GM12878 (cell line): ENCODE measurements at regions of chr17 and their contacts with region 1.

Region 1: GRCh38 chr17:48024937-48025906 is 12.4 kb downstream of the COPZ2 start:
- DNase-seq: peak; percentile 70
- ATAC-seq: peak; percentile 91
- H3K4me3 ChIP-seq: peak overlapping the region; percentile 80
- H3K27ac ChIP-seq: no peak overlapping the region
- H3K4me1 ChIP-seq: peaks cover 27% of the 10 kb centered on the region
- H3K27me3 ChIP-seq: no peaks in the 10 kb centered on the region; a peak in 2 of 4 replicates
- CTCF ChIP-seq: peak; percentile 85 to 98 (median 89)
- EP300 ChIP-seq: no peak
- POLR2A ChIP-seq: peak; percentile 54; the same call in 1 of the 2 replicates
- RAD21 ChIP-seq: peak; percentile 88

Region 2: DNA sequence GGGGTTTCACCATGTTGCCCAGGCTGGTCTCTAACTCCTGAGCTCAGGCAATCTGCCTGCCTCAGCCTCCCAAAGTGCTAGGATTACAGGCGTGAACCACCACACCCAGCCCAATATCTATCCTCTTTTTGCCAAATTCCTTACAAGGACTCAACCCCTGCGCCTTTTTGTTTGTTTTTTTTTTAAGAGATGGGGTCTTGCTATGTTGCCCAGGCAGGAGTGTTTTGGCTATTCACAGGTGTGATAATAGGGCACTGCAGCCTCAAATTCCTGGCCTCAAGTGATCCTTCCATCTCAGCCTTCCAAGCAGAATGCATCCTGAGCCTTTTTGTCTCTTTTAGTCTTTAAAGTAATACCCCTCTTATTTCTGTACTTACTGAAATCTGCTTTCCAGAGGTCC is 112.2 kb before region 1 on chr17:
- CTCF ChIA-PET with region 1: no interaction called
- POLR2A ChIA-PET with region 1: no interaction called
- RAD21 ChIA-PET with region 1: no interaction called
- SMC1A ChIA-PET with region 1: no interaction called
- in situ Hi-C with region 1: no loop called
- intact Hi-C with region 1: no loop called
- DNase-seq: no peak
- ATAC-seq: no peak
- H3K4me3 ChIP-seq: no peak overlapping the region
- H3K27ac ChIP-seq: no peak overlapping the region
- H3K4me1 ChIP-seq: no peaks in the 10 kb centered on the region
- H3K27me3 ChIP-seq: no peaks in the 10 kb centered on the region
- CTCF ChIP-seq: no peak
- EP300 ChIP-seq: no peak
- POLR2A ChIP-seq: no peak
- RAD21 ChIP-seq: no peak

Region 3: DNA sequence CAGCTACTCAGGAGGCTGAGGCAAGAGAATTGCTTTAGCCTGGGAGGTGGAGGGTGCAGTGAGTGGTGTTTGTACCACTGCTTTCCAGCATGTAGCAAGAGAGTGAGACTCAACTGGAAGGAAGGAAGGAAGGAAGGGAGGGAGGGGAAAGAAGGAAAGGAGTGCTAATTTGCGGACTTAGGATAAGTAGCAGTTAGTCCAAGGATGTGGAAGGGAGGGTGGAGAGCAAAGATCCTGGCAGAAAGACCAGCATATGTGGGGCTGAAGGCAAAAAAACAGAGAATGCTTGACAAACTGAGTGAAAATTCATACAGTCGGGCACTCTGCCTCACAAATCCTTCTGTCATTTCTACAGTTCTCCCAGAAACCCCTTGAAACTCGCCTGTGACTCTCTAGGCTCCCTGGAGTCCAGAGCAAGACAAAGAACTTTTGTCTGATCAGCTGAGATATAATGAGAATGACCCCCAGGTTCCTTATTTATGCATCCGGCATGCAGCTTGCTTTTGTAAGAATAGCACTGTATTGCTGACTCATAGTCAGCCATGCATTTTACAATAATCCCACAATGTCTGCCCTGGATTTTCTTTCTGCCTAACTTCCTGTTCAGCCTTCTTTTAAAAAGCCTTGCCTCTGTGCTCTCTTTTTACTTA is 22.8 kb before region 1 on chr17:
- CTCF ChIA-PET with region 1: interaction called, 10 read pairs
- POLR2A ChIA-PET with region 1: no interaction called
- RAD21 ChIA-PET with region 1: interaction called, 6 read pairs
- SMC1A ChIA-PET with region 1: interaction called, 10 read pairs
- in situ Hi-C with region 1: no loop called
- intact Hi-C with region 1: no loop called
- DNase-seq: peak; percentile 75
- ATAC-seq: peak; percentile 85
- H3K4me3 ChIP-seq: no peak overlapping the region
- H3K27ac ChIP-seq: peak overlapping the region; percentile 85
- H3K4me1 ChIP-seq: peaks cover 49% of the 10 kb centered on the region
- H3K27me3 ChIP-seq: no peaks in the 10 kb centered on the region
- CTCF ChIP-seq: no peak
- EP300 ChIP-seq: peak; percentile 47 to 77; a peak in 2 of 4 replicates
- POLR2A ChIP-seq: no peak
- RAD21 ChIP-seq: no peak

Region 4: GRCh38 chr17:48054238-48055185 is 29.3 kb after region 1 on chr17:
- CTCF ChIA-PET with region 1: interaction called, 87 read pairs
- POLR2A ChIA-PET with region 1: interaction called, 29 read pairs
- RAD21 ChIA-PET with region 1: interaction called, 47 read pairs
- SMC1A ChIA-PET with region 1: interaction called, 39 read pairs
- in situ Hi-C with region 1: no loop called
- intact Hi-C with region 1: loop called (anchors 2 kb)
- DNase-seq: no peak
- ATAC-seq: peak; percentile 7
- H3K4me3 ChIP-seq: peak overlapping the region; percentile 64; the same call in 1 of the 2 replicates
- H3K27ac ChIP-seq: peak overlapping the region; percentile 68
- H3K4me1 ChIP-seq: peaks cover 29% of the 10 kb centered on the region
- H3K27me3 ChIP-seq: no peaks in the 10 kb centered on the region
- CTCF ChIP-seq: no peak
- EP300 ChIP-seq: no peak
- POLR2A ChIP-seq: no peak; the same call in 1 of the 2 replicates
- RAD21 ChIP-seq: no peak

Region 5: GRCh38 chr17:48084932-48085444 is 59.8 kb after region 1 on chr17:
- CTCF ChIA-PET with region 1: interaction called, 124 read pairs
- POLR2A ChIA-PET with region 1: no interaction called
- RAD21 ChIA-PET with region 1: interaction called, 117 read pairs
- SMC1A ChIA-PET with region 1: interaction called, 19 read pairs
- in situ Hi-C with region 1: no loop called
- intact Hi-C with region 1: no loop called
- DNase-seq: no peak
- ATAC-seq: no peak
- H3K4me3 ChIP-seq: no peak overlapping the region
- H3K27ac ChIP-seq: no peak overlapping the region
- H3K4me1 ChIP-seq: no peaks in the 10 kb centered on the region
- H3K27me3 ChIP-seq: no peaks in the 10 kb centered on the region
- CTCF ChIP-seq: no peak
- EP300 ChIP-seq: no peak
- POLR2A ChIP-seq: no peak
- RAD21 ChIP-seq: no peak

Region 6: GRCh38 chr17:48131216-48131824 is 106.1 kb after region 1 on chr17:
- CTCF ChIA-PET with region 1: interaction called, 40 read pairs
- POLR2A ChIA-PET with region 1: no interaction called
- RAD21 ChIA-PET with region 1: interaction called, 17 read pairs
- SMC1A ChIA-PET with region 1: interaction called, 3 read pairs
- in situ Hi-C with region 1: loop called (anchors 5 kb)
- intact Hi-C with region 1: loop called (anchors 1 kb)
- DNase-seq: no peak
- ATAC-seq: peak; percentile 91
- H3K4me3 ChIP-seq: no peak overlapping the region
- H3K27ac ChIP-seq: no peak overlapping the region
- H3K4me1 ChIP-seq: no peaks in the 10 kb centered on the region
- H3K27me3 ChIP-seq: no peaks in the 10 kb centered on the region
- CTCF ChIP-seq: peak; percentile 76 to 88 (median 80)
- EP300 ChIP-seq: no peak
- POLR2A ChIP-seq: no peak
- RAD21 ChIP-seq: peak; percentile 91